ENCODE measurements at regions of chr1 and their contacts with region 1.

Region 1: DNA sequence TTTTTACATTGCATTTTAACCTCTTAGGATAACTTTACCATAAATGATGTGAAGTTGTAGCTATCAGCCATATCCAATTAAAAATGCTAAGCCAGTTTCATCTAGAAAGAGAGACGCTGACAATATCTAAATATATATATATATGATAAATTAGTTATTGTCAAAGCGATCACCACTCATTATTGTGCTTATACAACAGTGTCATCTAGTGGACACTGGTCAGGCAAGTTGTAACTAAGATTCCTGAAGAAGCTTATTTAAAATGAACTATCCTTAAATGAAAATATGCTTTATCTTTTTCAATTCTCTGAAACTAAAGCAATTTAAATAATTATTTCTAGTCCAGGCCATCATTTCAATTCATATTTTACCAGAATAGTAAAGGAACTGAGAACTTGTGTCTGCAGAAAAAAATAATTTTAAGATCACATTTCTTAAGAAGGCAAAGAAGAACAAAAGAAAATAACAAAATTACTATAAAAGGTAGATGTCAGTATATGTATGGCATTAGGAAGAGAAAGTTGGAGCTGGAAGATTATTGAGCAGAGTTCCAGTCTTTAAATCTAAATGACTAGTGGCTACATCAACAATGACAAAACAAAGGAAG is 193.3 kb upstream of the SNX7 start:
- DNase-seq: peak; percentile 42
- H3K4me3 ChIP-seq: no peak overlapping the region
- H3K27ac ChIP-seq: no peak overlapping the region
- H3K4me1 ChIP-seq: peaks cover 16% of the 10 kb centered on the region
- H3K27me3 ChIP-seq: no peaks in the 10 kb centered on the region
- CTCF ChIP-seq: peak; percentile 89 to 90

Region 2: GRCh38 chr1:96979304-96980268 is 1488.6 kb before region 1 on chr1:
- CTCF ChIA-PET with region 1: no interaction called
- dilution Hi-C with region 1: no loop called
- in situ Hi-C with region 1: loop called in 1 of 2 experiments (anchors 25 kb)
- intact Hi-C with region 1: no loop called
- DNase-seq: no peak
- H3K4me3 ChIP-seq: no peak overlapping the region
- H3K27ac ChIP-seq: no peak overlapping the region
- H3K4me1 ChIP-seq: no peaks in the 10 kb centered on the region
- H3K27me3 ChIP-seq: no peaks in the 10 kb centered on the region
- CTCF ChIP-seq: no peak

Region 3: DNA sequence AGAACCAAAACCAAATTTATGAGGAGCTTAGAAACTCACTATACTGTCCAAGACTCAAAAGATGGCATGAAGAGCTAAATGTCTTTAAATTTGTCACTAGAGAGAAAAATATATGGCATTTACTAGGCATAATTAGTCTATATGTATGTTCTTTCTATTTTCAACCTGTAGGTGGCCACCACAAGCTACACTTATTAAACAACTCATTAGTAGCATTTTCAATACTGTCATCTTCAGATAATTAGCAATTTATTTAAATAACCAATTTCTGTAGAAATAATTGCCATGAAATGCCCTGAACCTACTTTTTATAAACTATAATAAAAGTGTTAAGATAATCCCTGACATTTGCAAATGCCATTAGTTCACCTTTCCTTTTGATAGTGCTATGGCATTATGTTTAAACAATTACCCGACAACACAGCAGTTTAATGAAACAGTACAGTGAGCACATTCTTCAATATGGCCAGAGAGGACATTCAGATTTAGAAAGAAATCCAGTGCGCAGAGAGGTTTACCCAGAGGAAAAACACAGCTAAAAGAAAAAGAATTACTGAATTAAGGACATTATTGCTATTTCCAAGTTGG is 1224.1 kb before region 1 on chr1:
- CTCF ChIA-PET with region 1: no interaction called
- dilution Hi-C with region 1: no loop called
- in situ Hi-C with region 1: no loop called
- intact Hi-C with region 1: loop called (anchors 5 kb)
- DNase-seq: peak; percentile 5
- H3K4me3 ChIP-seq: no peak overlapping the region
- H3K27ac ChIP-seq: no peak overlapping the region
- H3K4me1 ChIP-seq: no peaks in the 10 kb centered on the region
- H3K27me3 ChIP-seq: no peaks in the 10 kb centered on the region
- CTCF ChIP-seq: peak; percentile 51 to 57

Region 4: DNA sequence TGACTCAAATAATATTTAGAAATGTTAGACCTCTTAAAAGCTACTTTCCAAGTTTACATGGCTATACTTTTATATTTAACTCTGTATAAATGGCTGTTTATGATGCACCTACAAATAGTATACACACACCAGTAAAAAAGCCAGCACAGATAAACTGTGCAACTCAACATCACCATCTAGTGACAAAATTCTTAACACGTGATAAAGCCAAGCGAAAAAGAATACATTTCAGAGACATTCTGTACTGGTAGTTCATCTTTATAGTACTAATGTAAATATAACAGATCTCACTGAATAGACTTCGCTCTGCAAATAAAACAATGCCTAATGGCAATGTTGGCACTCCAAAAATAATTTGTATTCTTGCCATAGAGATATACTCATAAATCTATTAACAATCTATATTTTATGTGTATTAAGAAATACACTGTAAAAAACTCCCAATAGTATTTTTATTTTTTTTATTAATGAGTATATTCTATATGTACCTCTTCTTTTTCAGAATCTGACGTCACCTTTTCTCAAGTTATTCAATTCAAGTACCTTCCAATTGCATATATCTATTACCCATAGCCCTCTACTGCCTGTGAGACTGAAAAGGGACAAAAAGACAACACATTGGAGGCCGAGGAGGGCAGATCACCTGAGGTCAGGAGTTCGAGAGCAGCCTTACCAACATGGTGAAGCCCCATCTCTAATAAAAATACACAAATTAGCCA is 647.6 kb before region 1 on chr1:
- CTCF ChIA-PET with region 1: no interaction called
- dilution Hi-C with region 1: no loop called
- in situ Hi-C with region 1: no loop called
- intact Hi-C with region 1: loop called (anchors 5 kb)
- DNase-seq: peak; percentile 23
- H3K4me3 ChIP-seq: no peak overlapping the region
- H3K27ac ChIP-seq: no peak overlapping the region
- H3K4me1 ChIP-seq: no peaks in the 10 kb centered on the region
- H3K27me3 ChIP-seq: no peaks in the 10 kb centered on the region
- CTCF ChIP-seq: peak; percentile 36 to 53

Region 5: DNA sequence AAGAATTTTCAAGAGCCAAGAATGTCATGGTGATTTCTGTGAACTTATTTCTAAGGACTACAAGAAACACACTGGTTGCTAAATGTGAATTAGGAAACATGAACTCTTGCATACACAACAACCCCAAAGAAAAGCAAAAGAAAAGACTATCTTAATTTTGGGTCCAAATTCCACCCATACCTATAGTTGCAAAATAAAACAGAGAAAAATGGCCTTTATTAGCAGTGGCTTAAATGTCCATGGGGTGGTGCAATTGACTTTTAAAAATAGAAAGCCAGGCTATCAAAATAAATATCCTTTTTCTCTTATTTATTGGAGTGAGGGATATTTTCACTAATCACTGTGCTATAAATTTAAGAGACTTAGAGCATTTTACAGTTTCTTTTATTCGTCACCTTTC is 466.4 kb before region 1 on chr1:
- CTCF ChIA-PET with region 1: interaction called, 3 read pairs
- dilution Hi-C with region 1: no loop called
- in situ Hi-C with region 1: no loop called
- intact Hi-C with region 1: loop called (anchors 1 kb)
- DNase-seq: no peak
- H3K4me3 ChIP-seq: no peak overlapping the region
- H3K27ac ChIP-seq: no peak overlapping the region
- H3K4me1 ChIP-seq: peaks cover 6% of the 10 kb centered on the region
- H3K27me3 ChIP-seq: no peaks in the 10 kb centered on the region
- CTCF ChIP-seq: peak; percentile 8 to 35

Region 6: DNA sequence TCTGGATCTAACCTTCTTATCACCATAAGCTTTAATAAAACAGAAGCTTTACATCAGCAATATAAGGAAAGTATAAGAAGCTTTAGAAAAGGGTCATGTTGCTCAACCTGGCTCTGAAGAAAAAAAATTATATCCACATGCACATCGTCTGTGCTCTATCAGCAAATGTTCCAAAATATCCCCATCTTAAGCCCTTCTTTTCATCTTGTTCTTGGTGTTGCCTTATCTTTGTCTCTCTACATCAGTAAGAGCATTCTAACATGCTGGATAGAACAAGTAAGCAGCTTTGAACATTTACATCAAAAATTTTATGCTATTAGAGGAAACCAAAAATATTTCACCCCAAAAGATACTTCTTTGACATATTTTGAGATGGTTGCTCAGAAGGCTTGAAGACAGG is 35.6 kb after region 1 on chr1:
- CTCF ChIA-PET with region 1: no interaction called
- dilution Hi-C with region 1: no loop called
- in situ Hi-C with region 1: no loop called
- intact Hi-C with region 1: no loop called
- DNase-seq: no peak
- H3K4me3 ChIP-seq: no peak overlapping the region
- H3K27ac ChIP-seq: no peak overlapping the region
- H3K4me1 ChIP-seq: no peaks in the 10 kb centered on the region
- H3K27me3 ChIP-seq: no peaks in the 10 kb centered on the region
- CTCF ChIP-seq: no peak

Measured in mammary epithelial cell (primary cell).